ENCODE measurements at regions of chr6 and their contacts with region 1.

Region 1: GRCh38 chr6:71533939-71534379 is 245.3 kb downstream of the OGFRL1 start:
- H3K4me3 ChIP-seq: no peak overlapping the region
- H3K27ac ChIP-seq: no peak overlapping the region
- H3K4me1 ChIP-seq: no peaks in the 10 kb centered on the region
- CTCF ChIP-seq: no peak

Region 2: GRCh38 chr6:71523548-71523947 is 10.4 kb before region 1 on chr6:
- CTCF ChIA-PET with region 1: interaction called, 11 read pairs
- POLR2A ChIA-PET with region 1: no interaction called
- H3K4me3 ChIP-seq: no peak overlapping the region
- H3K27ac ChIP-seq: no peak overlapping the region
- H3K4me1 ChIP-seq: no peaks in the 10 kb centered on the region
- CTCF ChIP-seq: no peak

Region 3: DNA sequence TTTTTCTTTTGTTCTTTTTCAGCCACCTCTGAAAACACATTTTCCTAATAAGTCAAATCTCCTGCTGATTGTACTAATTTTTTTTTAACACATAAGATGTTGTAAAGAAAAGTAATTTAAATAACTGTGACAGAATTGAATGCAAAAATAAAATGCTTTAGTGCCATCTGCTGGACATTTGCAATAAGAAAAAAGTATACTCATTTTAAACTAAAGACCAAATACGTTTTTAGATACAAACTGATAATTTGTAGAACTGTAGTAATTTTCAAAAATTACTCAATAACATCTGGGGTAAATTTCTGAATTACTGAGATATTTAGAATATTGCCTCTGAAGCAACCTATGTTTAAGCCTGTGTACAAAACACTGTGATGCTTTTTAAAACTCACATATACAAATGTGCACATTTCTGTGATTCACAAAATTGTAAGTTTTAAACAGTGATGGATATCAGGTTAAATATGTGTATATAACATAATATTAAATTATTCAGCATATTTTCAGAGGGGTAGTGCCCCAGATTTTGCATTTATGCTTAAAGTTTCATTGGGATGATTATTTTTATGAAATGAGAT is 551.1 kb after region 1 on chr6:
- CTCF ChIA-PET with region 1: interaction called, 16 read pairs
- POLR2A ChIA-PET with region 1: no interaction called
- H3K4me3 ChIP-seq: no peak overlapping the region
- H3K27ac ChIP-seq: no peak overlapping the region
- H3K4me1 ChIP-seq: no peaks in the 10 kb centered on the region
- CTCF ChIP-seq: no peak

Measured in HEK293 (cell line).